Heart left ventricle (tissue), 16 donors: ENCODE measurements at regions of chr12 and their contacts with region 1.

Region 1: GRCh38 chr12:23585782-23586163 is 363.7 kb downstream of the SOX5 start:
- DNase-seq: no peak
- ATAC-seq: no peak
- H3K4me3 ChIP-seq: no peak overlapping the region
- H3K27ac ChIP-seq: no peak overlapping the region
- H3K4me1 ChIP-seq: no peaks in the 10 kb centered on the region
- H3K27me3 ChIP-seq: no peaks in the 10 kb centered on the region
- CTCF ChIP-seq: no peak
- POLR2A ChIP-seq: no peak

Region 2: GRCh38 chr12:23495472-23495871 is 90.3 kb before region 1 on chr12:
- intact Hi-C with region 1: loop called in 1 of 10 experiments (anchors 5 kb)
- DNase-seq: no peak
- ATAC-seq: no peak
- H3K4me3 ChIP-seq: no peak overlapping the region
- H3K27ac ChIP-seq: no peak overlapping the region
- H3K4me1 ChIP-seq: no peaks in the 10 kb centered on the region
- H3K27me3 ChIP-seq: no peaks in the 10 kb centered on the region
- CTCF ChIP-seq: no peak
- POLR2A ChIP-seq: no peak

Region 3: DNA sequence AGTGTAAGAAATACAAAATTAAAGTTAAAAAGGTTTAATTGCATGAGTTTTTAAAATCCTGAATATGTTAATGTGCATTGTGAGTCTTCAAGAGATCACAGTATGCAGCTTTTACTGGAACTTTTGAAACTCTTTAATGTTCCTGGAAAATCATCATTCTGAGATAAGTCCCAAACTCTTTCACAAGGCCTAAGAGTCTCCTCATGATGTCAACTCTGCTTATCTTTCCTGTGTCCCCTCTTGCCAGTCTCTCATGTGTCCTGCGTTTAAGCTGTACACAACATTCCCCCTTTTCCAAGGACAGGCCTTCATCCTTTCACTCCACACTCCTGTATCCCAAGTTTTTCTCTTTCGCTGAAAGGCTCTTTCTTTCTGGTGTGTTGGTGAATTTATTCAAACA is 16.4 kb before region 1 on chr12:
- intact Hi-C with region 1: loop called in 1 of 10 experiments (anchors 2 kb)
- DNase-seq: no peak
- ATAC-seq: no peak
- H3K4me3 ChIP-seq: no peak overlapping the region
- H3K27ac ChIP-seq: no peak overlapping the region
- H3K4me1 ChIP-seq: no peaks in the 10 kb centered on the region
- H3K27me3 ChIP-seq: no peaks in the 10 kb centered on the region
- CTCF ChIP-seq: no peak
- POLR2A ChIP-seq: no peak